Sigmoid colon (tissue), 7 donors: ENCODE measurements at regions of chr20 and their contacts with region 1.

Region 1: DNA sequence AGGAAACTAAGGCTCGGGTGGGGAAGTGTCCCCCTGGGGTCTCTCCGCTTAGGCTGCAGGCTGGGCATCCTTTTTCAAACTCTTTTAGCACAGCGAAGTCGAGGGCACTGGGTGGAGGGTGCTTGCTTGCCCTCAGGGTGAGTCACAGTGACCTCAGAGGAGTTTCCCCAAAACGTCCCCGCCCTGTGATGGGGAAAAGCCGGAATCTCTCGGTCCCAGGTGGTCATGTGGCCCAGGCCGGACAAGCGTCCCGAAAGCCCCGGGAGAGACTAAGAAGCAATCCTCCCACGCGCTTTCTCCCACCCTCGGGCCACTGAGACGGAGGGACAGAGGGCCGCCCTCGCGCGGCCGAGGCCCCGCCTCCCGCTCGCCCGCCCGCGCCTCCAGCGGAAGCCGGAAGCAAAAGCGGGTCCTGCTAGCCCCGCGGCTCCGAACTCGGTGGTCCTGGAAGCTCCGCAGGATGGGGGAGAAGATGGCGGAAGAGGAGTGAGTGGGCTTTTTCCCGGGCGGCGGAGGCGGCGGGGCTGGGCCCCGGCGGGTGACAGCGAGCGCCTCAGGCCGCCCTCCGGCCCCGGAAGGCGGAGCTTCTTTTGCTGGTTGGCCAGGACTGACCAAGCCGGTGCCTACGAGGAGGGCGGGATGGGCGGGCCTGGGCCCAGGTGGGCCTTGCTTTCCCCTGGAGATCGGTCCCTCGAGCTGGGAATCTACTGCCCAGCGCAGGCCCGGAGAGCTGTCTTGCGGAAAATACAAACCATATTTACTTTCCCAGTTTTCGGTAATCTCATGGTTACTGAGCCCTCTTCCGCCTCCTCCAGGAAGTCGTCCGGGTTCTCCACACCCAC is at the start of gene SLC9A8:
- DNase-seq: peak; percentile 95
- H3K4me3 ChIP-seq: peak within 1 kb of the TSS; percentile 75 to 97 (median 86)
- H3K27ac ChIP-seq: peak within 1 kb of the TSS; percentile 86 to 98 (median 94)
- H3K4me1 ChIP-seq: peaks cover 0 to 18% (median 15%) of the 10 kb centered on the region in 4 donors
- H3K27me3 ChIP-seq: no peaks in the 10 kb centered on the region
- CTCF ChIP-seq: peak in 3 of 4 experiments; percentile 20 to 46 (median 41)
- EP300 ChIP-seq: peak in 1 of 4 donors; percentile 21
- POLR2A ChIP-seq: peak; percentile 34 to 77
- total RNA-seq, gene SLC9A8: 4.9 to 8.7 (median 6.0) TPM

Region 2: GRCh38 chr20:49636447-49636846 is 176.2 kb before region 1 on chr20:
- intact Hi-C with region 1: loop called (anchors 2 kb)
- DNase-seq: peak; percentile 79
- H3K4me3 ChIP-seq: no peak overlapping the region
- H3K27ac ChIP-seq: peak overlapping the region in 3 of 4 donors; percentile 74 to 81 (median 79)
- H3K4me1 ChIP-seq: peaks cover 0 to 57% (median 34%) of the 10 kb centered on the region in 4 donors
- H3K27me3 ChIP-seq: no peaks in the 10 kb centered on the region
- CTCF ChIP-seq: no peak
- EP300 ChIP-seq: no peak
- POLR2A ChIP-seq: no peak

Region 3: GRCh38 chr20:49713753-49714712 is 98.7 kb before region 1 on chr20 and contains the start of gene B4GALT5:
- intact Hi-C with region 1: loop called (anchors 2 kb)
- DNase-seq: peak; percentile 82
- H3K4me3 ChIP-seq: peak within 1 kb of the TSS; percentile 80 to 98 (median 90)
- H3K27ac ChIP-seq: peak within 1 kb of the TSS; percentile 84 to 98 (median 94)
- H3K4me1 ChIP-seq: peaks cover 0 to 42% (median 32%) of the 10 kb centered on the region in 4 donors
- H3K27me3 ChIP-seq: no peaks in the 10 kb centered on the region
- CTCF ChIP-seq: no peak
- EP300 ChIP-seq: no peak
- POLR2A ChIP-seq: no peak
- total RNA-seq, gene B4GALT5: 17.4 to 33.4 (median 21.5) TPM

Region 4: DNA sequence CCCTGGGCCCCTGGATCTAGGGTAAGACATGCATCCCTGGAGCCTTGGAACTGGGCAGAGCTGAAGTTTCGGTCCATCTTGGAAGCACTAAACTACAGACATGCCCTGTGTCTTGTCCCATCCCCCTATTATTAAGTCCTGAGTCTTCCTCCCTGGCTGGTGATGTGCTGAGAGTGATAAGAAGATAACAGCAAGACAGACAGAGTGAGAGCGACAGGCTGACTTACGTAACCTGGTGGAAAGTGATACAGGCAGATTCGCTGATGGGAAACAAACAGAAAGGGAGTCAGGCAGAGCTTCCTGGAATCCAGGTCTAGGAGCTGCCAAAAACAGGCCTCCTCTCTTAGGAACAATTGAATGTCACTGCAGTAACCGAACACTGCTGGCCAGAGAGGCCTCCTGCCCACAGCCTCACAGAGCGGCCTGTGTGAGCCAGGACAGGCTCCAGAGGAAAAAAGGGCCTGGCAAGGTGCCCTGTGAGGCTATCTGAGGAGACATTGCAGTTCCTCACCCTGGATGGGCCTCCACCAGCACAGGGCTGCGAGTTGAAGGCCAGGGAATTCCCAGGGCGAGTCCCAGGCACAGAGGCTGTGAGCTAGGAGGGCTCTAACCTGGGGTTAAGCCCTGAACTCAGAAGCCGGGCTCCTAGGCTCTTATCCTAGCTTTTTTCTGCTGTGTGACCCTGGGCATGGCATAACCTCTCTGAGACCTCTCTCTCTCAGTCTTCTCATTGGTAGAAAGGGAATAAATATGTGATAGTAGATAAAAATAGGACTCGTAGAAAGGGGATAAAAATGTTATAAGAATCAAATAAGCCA is 64.8 kb before region 1 on chr20:
- intact Hi-C with region 1: loop called (anchors 5 kb)
- DNase-seq: peak; percentile 97
- H3K4me3 ChIP-seq: no peak overlapping the region
- H3K27ac ChIP-seq: peak overlapping the region; percentile 80 to 88 (median 82)
- H3K4me1 ChIP-seq: peaks cover 0 to 34% (median 25%) of the 10 kb centered on the region in 4 donors
- H3K27me3 ChIP-seq: no peaks in the 10 kb centered on the region
- CTCF ChIP-seq: no peak
- EP300 ChIP-seq: peak in 1 of 4 donors; percentile 25
- POLR2A ChIP-seq: no peak